ENCODE measurements at regions of chr1 and their contacts with region 1.

Region 1: GRCh38 chr1:43039228-43040055 is 80.8 kb upstream of the SLC2A1 start:
- DNase-seq: no peak
- ATAC-seq: no peak
- H3K4me3 ChIP-seq: no peak overlapping the region
- H3K4me3 Mint-ChIP-seq: no peak overlapping the region
- H3K27ac ChIP-seq: no peak overlapping the region
- H3K27ac Mint-ChIP-seq: no peak overlapping the region
- H3K4me1 ChIP-seq: peaks cover 20% of the 10 kb centered on the region
- H3K4me1 Mint-ChIP-seq: peaks cover 11% of the 10 kb centered on the region
- H3K27me3 ChIP-seq: no peaks in the 10 kb centered on the region
- H3K27me3 Mint-ChIP-seq: no peaks in the 10 kb centered on the region
- CTCF ChIP-seq: no peak

Region 2: GRCh38 chr1:42979896-42980800 is 59.3 kb before region 1 on chr1:
- CTCF ChIA-PET with region 1: no interaction called
- POLR2A ChIA-PET with region 1: no interaction called
- intact Hi-C with region 1: loop called in 1 of 2 experiments (anchors 5 kb)
- DNase-seq: peak in 3 of 14 experiments; percentile 11 to 49 (median 36)
- ATAC-seq: no peak
- H3K4me3 ChIP-seq: no peak overlapping the region
- H3K4me3 Mint-ChIP-seq: no peak overlapping the region
- H3K27ac ChIP-seq: no peak overlapping the region
- H3K27ac Mint-ChIP-seq: no peak overlapping the region
- H3K4me1 ChIP-seq: no peaks in the 10 kb centered on the region
- H3K4me1 Mint-ChIP-seq: no peaks in the 10 kb centered on the region
- H3K27me3 ChIP-seq: no peaks in the 10 kb centered on the region
- H3K27me3 Mint-ChIP-seq: no peaks in the 10 kb centered on the region
- CTCF ChIP-seq: no peak

Region 3: GRCh38 chr1:42993631-42994121 is 45.8 kb before region 1 on chr1:
- CTCF ChIA-PET with region 1: no interaction called
- POLR2A ChIA-PET with region 1: no interaction called
- intact Hi-C with region 1: no loop called
- DNase-seq: peak in 3 of 14 experiments; percentile 18 to 34 (median 29)
- ATAC-seq: no peak
- H3K4me3 ChIP-seq: no peak overlapping the region
- H3K4me3 Mint-ChIP-seq: no peak overlapping the region
- H3K27ac ChIP-seq: no peak overlapping the region
- H3K27ac Mint-ChIP-seq: no peak overlapping the region
- H3K4me1 ChIP-seq: no peaks in the 10 kb centered on the region
- H3K4me1 Mint-ChIP-seq: no peaks in the 10 kb centered on the region
- H3K27me3 ChIP-seq: no peaks in the 10 kb centered on the region
- H3K27me3 Mint-ChIP-seq: no peaks in the 10 kb centered on the region
- CTCF ChIP-seq: no peak